PC-3 (cell line): ENCODE measurements at regions of chr5 and their contacts with region 1.

Region 1: GRCh38 chr5:180315762-180316212 is 23.9 kb upstream of the MAPK9 start:
- DNase-seq: peak; percentile 66
- ATAC-seq: 0 out of 2 replicates have a peak, but pooled peaks have one; percentile 5
- H3K4me3 ChIP-seq: no peak overlapping the region
- H3K27ac ChIP-seq: no peak overlapping the region
- H3K4me1 ChIP-seq: 0 out of 2 replicates have a peak, but pooled peaks cover 5% of the 10 kb centered on the region
- H3K27me3 ChIP-seq: no peaks in the 10 kb centered on the region
- CTCF ChIP-seq: peak; percentile 87

Region 2: DNA sequence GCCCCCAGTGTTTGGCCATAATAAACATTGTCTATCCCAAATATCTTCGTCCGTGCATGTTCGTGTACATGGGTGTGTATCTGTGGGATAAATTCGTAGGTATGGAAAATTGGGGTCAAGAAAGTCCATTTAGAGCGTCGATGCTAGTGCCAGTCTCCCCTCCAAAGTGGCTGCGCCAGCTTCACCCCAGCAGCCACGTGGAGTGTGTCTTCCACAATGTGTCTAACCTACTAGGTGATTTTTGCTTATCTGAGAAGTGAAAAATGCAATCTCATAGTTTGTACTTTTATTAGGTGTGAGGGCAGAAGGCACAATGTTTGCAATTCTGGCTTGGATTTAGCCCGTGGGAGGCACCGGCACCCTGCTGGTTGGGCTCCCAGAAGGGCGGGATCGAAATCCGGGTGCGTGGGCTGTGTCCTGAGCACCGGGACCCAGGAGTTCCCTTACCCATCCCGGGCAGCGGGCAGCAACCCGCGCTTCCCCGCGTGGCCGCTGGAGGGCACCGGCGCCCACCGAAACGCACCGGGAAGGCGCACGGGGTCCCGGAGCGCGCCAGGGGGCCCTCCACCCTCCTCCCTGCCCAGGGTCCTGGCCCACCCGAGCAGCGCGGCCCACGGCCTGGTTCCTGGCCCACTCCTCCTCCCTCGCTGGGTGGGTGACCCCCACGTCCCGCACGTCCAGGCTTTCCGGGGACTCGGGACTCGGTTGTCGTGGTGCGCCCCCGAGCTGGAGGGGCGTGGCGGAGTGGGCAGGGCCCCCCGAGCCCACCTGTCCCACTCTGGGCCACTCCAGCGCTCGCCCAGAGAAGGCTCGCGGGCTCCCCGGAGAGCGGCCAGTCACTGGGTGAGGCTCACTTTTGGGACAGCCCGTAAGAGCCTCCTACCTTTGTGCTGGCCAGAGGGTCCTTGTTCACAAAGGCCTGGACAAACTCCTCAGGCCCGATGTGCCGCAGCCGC is 188.8 kb before region 1 on chr5:
- CTCF ChIA-PET with region 1: no interaction called
- POLR2A ChIA-PET with region 1: no interaction called
- intact Hi-C with region 1: loop called (anchors 10 kb)
- DNase-seq: peak; percentile 30
- ATAC-seq: peak; percentile 65
- H3K4me3 ChIP-seq: 0 out of 2 replicates have a peak overlapping the region, but pooled peaks have one; percentile 21
- H3K27ac ChIP-seq: no peak overlapping the region
- H3K4me1 ChIP-seq: no peaks in the 10 kb centered on the region
- H3K27me3 ChIP-seq: no peaks in the 10 kb centered on the region
- CTCF ChIP-seq: peak; percentile 74

Region 3: DNA sequence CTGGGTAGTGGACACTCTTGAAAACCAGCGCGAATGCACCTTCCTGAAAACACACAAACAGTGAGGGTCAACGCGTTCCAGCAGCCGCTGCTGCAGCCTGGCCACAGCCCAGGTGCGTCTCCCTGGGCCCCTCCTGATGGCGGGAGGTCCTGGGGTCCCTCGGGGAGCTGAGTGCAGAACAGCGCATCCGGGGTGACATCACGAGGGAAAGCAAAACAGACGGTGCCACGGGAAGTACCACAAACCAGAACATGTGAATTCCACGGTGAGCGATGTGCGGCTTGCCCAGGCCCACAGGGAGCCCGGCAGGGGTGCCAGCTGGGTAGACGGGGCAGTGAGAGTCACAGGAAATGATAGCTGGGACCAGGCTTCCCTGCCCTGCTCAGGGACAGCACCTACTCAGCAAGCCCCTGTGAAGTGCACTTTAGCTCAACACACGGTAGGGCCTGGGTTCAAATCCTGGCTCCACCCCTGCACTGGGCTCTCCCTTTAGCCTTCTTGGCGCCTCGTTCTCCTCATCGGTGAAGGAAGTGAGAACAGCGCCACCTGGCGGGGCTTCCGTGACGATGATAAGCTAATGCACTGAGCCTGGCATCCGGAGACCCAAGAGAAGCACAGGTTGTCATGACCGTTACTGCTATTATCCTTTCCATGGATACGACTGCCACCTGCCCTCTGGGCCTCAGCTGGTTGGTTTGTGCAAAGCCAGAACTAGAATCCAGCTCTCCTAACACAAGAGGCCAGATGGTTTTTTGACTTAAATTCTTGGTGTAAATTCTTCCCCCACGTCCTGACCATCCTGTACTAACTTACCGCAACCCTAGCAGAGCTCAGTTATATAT is 12.7 kb after region 1 on chr5:
- CTCF ChIA-PET with region 1: interaction called, 23 read pairs
- POLR2A ChIA-PET with region 1: no interaction called
- intact Hi-C with region 1: no loop called
- DNase-seq: peak; percentile 85
- ATAC-seq: peak; percentile 41
- H3K4me3 ChIP-seq: no peak overlapping the region
- H3K27ac ChIP-seq: no peak overlapping the region
- H3K4me1 ChIP-seq: peaks cover 34% of the 10 kb centered on the region
- H3K27me3 ChIP-seq: no peaks in the 10 kb centered on the region
- CTCF ChIP-seq: peak; percentile 76

Region 4: DNA sequence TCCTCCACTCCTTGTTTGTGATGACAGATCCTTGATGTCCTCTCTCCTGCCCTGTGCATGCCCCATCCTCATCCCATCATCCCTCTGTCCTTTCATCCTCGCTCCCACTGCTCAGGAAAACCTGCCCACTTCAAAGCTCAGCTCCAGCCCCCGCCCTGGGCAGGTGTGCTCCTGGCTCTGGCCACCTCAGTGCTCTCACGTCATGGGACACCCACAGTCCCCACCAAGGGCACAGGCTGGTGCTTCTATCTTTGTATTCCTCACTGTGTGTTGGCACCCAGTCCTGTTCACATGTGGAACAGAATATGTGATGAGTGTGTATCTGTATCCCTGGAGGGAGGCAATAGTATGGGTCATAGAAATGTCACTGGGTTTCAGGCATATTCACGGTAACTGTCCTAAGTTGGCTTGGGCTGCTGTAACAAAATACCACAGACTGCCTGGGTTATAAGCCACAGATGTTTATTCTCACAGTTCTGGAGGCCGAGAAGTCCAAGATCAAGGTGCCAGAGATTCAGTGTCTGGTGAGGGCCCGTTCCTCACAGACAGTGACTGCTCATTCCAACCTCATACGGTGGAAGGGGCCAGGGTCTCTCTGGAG is 23.9 kb after region 1 on chr5:
- CTCF ChIA-PET with region 1: no interaction called
- POLR2A ChIA-PET with region 1: no interaction called
- intact Hi-C with region 1: no loop called
- DNase-seq: no peak
- ATAC-seq: no peak
- H3K4me3 ChIP-seq: no peak overlapping the region
- H3K27ac ChIP-seq: no peak overlapping the region
- H3K4me1 ChIP-seq: no peaks in the 10 kb centered on the region
- H3K27me3 ChIP-seq: no peaks in the 10 kb centered on the region
- CTCF ChIP-seq: no peak

Region 5: GRCh38 chr5:180470966-180471582 is 155.3 kb after region 1 on chr5:
- CTCF ChIA-PET with region 1: interaction called, 7 read pairs
- POLR2A ChIA-PET with region 1: no interaction called
- intact Hi-C with region 1: loop called (anchors 5 kb)
- DNase-seq: peak; percentile 61
- ATAC-seq: peak; percentile 34; the same call in 1 of the 2 replicates
- H3K4me3 ChIP-seq: no peak overlapping the region
- H3K27ac ChIP-seq: no peak overlapping the region
- H3K4me1 ChIP-seq: peaks cover 6% of the 10 kb centered on the region; the same call in 1 of the 2 replicates
- H3K27me3 ChIP-seq: no peaks in the 10 kb centered on the region
- CTCF ChIP-seq: peak; percentile 85